CD8-positive, alpha-beta T cell (primary cell): ENCODE measurements at regions of chr22 and their contacts with region 1.

Region 1: DNA sequence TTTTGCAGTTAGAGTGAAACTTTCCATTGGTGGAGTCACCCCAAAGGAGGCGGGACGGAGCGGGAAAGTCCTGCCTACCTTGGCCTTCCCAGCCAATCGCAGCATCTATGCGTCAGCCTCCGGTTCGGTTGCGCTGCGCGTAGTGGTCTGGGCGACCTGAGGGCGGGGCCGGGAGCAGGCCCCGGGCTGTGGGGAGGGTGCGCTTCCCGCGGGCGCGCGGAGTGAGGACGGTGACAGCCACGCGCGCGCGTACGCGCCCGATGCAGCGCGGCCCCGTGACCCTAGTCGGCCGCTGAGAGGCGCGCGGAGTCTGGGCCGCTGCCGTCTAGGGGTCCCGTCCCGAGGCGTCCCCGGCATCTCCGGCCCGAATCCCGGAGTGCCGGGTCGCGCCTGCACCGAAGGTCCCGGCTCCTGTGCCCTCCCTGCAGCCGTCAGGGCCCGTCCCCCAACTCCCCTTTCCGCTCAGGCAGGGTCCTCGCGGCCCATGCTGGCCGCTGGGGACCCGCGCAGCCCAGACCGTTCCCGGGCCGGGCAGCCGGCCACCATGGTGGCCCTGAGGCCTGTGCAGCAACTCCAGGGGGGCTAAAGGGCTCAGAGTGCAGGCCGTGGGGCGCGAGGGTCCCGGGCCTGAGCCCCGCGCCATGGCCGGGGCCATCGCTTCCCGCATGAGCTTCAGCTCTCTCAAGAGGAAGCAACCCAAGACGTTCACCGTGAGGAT is at the start of gene NF2:
- DNase-seq: peak; percentile 96 to 100 (median 98)
- ATAC-seq: peak; percentile 98
- H3K4me3 ChIP-seq: peak within 1 kb of the TSS; percentile 77 to 86
- H3K4me3 Mint-ChIP-seq: peak within 1 kb of the TSS; percentile 93
- H3K27ac ChIP-seq: peak within 1 kb of the TSS; percentile 84 to 90
- H3K27ac Mint-ChIP-seq: peak within 1 kb of the TSS; percentile 97
- H3K4me1 ChIP-seq: peaks cover 18% of the 10 kb centered on the region
- H3K4me1 Mint-ChIP-seq: peaks cover 25% of the 10 kb centered on the region
- H3K27me3 ChIP-seq: no peaks in the 10 kb centered on the region
- H3K27me3 Mint-ChIP-seq: no peaks in the 10 kb centered on the region
- CTCF ChIP-seq: no peak
- total RNA-seq, gene NF2: 22.6 to 23.2 TPM

Region 2: DNA sequence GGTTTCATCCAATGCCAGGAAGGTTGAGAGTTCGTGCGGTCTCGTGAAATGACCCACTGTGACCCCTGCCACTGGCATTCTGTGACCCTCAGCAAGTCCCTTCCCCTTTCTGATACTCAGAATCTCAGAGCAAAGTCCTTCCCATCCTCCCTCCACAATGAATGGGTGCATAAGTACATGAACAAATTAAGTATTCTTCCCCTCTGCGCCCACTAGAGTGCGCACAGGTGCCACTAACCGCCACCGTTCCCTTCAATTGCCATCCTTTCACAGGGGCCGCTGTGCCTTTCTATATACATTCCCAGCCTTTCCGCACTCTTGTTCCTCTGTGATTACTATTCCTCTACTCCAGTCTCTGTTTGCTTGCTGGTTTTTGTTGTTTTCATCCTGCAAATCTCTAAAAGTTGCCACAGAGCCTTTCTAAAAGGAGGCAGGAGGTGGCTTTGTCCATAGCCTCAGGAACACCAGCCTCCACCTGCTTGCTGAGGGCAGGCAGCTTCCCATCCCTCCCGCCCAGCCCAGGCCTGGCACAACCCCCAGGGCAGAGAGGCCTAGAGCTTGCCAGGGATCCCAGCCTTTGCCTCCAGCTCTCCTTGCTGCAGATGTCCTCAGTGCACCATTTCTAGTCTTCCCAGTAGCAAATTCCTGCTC is 208.5 kb before region 1 on chr22:
- CTCF ChIA-PET with region 1: no interaction called
- POLR2A ChIA-PET with region 1: no interaction called
- intact Hi-C with region 1: loop called in 1 of 2 experiments (anchors 10 kb)
- DNase-seq: peak; percentile 41 to 82 (median 64)
- ATAC-seq: peak; percentile 97
- H3K4me3 ChIP-seq: no peak overlapping the region
- H3K4me3 Mint-ChIP-seq: no peak overlapping the region
- H3K27ac ChIP-seq: no peak overlapping the region
- H3K27ac Mint-ChIP-seq: no peak overlapping the region
- H3K4me1 ChIP-seq: no peaks in the 10 kb centered on the region
- H3K4me1 Mint-ChIP-seq: peaks cover 6% of the 10 kb centered on the region
- H3K27me3 ChIP-seq: no peaks in the 10 kb centered on the region
- H3K27me3 Mint-ChIP-seq: peaks cover 2% of the 10 kb centered on the region
- CTCF ChIP-seq: peak; percentile 75

Region 3: GRCh38 chr22:29580200-29580810 is 23.2 kb before region 1 on chr22:
- CTCF ChIA-PET with region 1: interaction called, 4 read pairs
- POLR2A ChIA-PET with region 1: no interaction called
- intact Hi-C with region 1: loop called (anchors 1 kb)
- DNase-seq: peak in 3 of 9 experiments; percentile 17 to 49 (median 36)
- ATAC-seq: peak; percentile 16
- H3K4me3 ChIP-seq: peak overlapping the region; percentile 69 to 80
- H3K4me3 Mint-ChIP-seq: peak overlapping the region; percentile 93
- H3K27ac ChIP-seq: peak overlapping the region; percentile 59 to 61
- H3K27ac Mint-ChIP-seq: peak overlapping the region; percentile 90
- H3K4me1 ChIP-seq: peaks cover 15% of the 10 kb centered on the region
- H3K4me1 Mint-ChIP-seq: peaks cover 21% of the 10 kb centered on the region
- H3K27me3 ChIP-seq: no peaks in the 10 kb centered on the region
- H3K27me3 Mint-ChIP-seq: no peaks in the 10 kb centered on the region
- CTCF ChIP-seq: no peak

Region 4: GRCh38 chr22:29625090-29625825 is 21.7 kb after region 1 on chr22:
- CTCF ChIA-PET with region 1: interaction called, 24 read pairs
- POLR2A ChIA-PET with region 1: interaction called, 7 read pairs
- intact Hi-C with region 1: no loop called
- DNase-seq: peak in 6 of 9 experiments; percentile 11 to 66 (median 29)
- ATAC-seq: no peak
- H3K4me3 ChIP-seq: no peak overlapping the region
- H3K4me3 Mint-ChIP-seq: no peak overlapping the region
- H3K27ac ChIP-seq: no peak overlapping the region
- H3K27ac Mint-ChIP-seq: no peak overlapping the region
- H3K4me1 ChIP-seq: peaks cover 25% of the 10 kb centered on the region
- H3K4me1 Mint-ChIP-seq: peaks cover 64% of the 10 kb centered on the region
- H3K27me3 ChIP-seq: no peaks in the 10 kb centered on the region
- H3K27me3 Mint-ChIP-seq: no peaks in the 10 kb centered on the region
- CTCF ChIP-seq: peak; percentile 86

Region 5: GRCh38 chr22:29813563-29813962 is 210.0 kb after region 1 on chr22:
- CTCF ChIA-PET with region 1: no interaction called
- POLR2A ChIA-PET with region 1: no interaction called
- intact Hi-C with region 1: no loop called
- DNase-seq: no peak
- ATAC-seq: no peak
- H3K4me3 ChIP-seq: no peak overlapping the region
- H3K4me3 Mint-ChIP-seq: no peak overlapping the region
- H3K27ac ChIP-seq: no peak overlapping the region
- H3K27ac Mint-ChIP-seq: no peak overlapping the region
- H3K4me1 ChIP-seq: no peaks in the 10 kb centered on the region
- H3K4me1 Mint-ChIP-seq: no peaks in the 10 kb centered on the region
- H3K27me3 ChIP-seq: no peaks in the 10 kb centered on the region
- H3K27me3 Mint-ChIP-seq: no peaks in the 10 kb centered on the region
- CTCF ChIP-seq: no peak

Region 6: GRCh38 chr22:29883045-29883774 is 279.7 kb after region 1 on chr22 and contains the start of gene MTMR3:
- CTCF ChIA-PET with region 1: no interaction called
- POLR2A ChIA-PET with region 1: no interaction called
- intact Hi-C with region 1: loop called in 1 of 2 experiments (anchors 1 kb)
- DNase-seq: peak; percentile 75 to 95 (median 93)
- ATAC-seq: peak; percentile 81
- H3K4me3 ChIP-seq: peak within 1 kb of the TSS; percentile 75 to 87
- H3K4me3 Mint-ChIP-seq: peak within 1 kb of the TSS; percentile 69
- H3K27ac ChIP-seq: peak within 1 kb of the TSS; percentile 72 to 80
- H3K27ac Mint-ChIP-seq: peak within 1 kb of the TSS; percentile 90
- H3K4me1 ChIP-seq: peaks cover 20% of the 10 kb centered on the region
- H3K4me1 Mint-ChIP-seq: peaks cover 8% of the 10 kb centered on the region
- H3K27me3 ChIP-seq: no peaks in the 10 kb centered on the region
- H3K27me3 Mint-ChIP-seq: peaks cover 3% of the 10 kb centered on the region
- CTCF ChIP-seq: peak; percentile 52
- total RNA-seq, gene MTMR3: 46.7 to 51.7 TPM

Region 7: DNA sequence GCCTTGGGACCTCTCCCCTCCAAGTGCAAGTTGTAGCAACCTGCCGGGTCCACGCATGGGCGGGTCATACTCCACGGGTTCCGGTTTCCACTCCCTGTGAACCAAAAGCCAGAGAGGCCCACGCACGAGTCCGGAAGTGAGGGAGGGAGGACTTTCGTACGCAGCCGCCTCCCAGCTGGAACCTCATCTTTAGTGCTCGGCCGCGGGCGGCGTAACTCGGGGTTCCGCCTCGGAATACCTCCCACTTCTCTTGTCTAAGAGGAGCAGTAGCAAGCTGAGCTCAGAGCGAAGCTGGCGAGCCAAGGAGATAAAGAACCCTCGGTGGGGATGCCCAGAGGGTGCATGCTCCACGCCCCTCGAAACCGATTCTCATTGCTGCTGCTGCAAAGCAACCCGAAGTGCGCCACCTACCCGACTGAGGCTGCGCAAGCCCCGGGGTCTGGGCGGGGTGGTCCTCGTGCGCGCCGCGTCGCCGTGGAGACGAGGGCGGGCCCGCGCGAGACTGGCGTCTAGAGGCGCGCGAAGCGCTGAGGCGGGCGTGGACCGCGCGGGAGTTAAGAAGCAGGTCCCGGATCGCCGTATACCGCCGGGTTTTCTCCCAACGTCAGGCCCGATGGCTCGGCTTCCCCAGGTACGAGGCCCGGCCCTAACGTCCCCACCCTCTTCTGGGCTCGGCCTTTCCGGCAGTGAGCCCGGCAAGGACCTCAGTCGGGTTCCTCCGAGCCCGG is 1892.7 kb after region 1 on chr22 and contains the start of gene SFI1:
- CTCF ChIA-PET with region 1: no interaction called
- POLR2A ChIA-PET with region 1: no interaction called
- intact Hi-C with region 1: loop called in 1 of 2 experiments (anchors 10 kb)
- DNase-seq: peak; percentile 93 to 98 (median 96)
- ATAC-seq: peak; percentile 83
- H3K4me3 ChIP-seq: peak within 1 kb of the TSS; percentile 83 to 91
- H3K4me3 Mint-ChIP-seq: peak within 1 kb of the TSS; percentile 95
- H3K27ac ChIP-seq: peak within 1 kb of the TSS; percentile 87 to 90
- H3K27ac Mint-ChIP-seq: peak within 1 kb of the TSS; percentile 99
- H3K4me1 ChIP-seq: peaks cover 27% of the 10 kb centered on the region
- H3K4me1 Mint-ChIP-seq: peaks cover 45% of the 10 kb centered on the region
- H3K27me3 ChIP-seq: no peaks in the 10 kb centered on the region
- H3K27me3 Mint-ChIP-seq: no peaks in the 10 kb centered on the region
- CTCF ChIP-seq: no peak
- total RNA-seq, gene SFI1: 217 to 235 TPM